ENCODE measurements at regions of chr12 and their contacts with region 1.

Region 1: GRCh38 chr12:109093022-109093918 is at the start of gene ALKBH2:
- DNase-seq: peak; percentile 98
- total RNA-seq, gene ALKBH2: 13.3 to 18.4 TPM

Region 2: GRCh38 chr12:108562348-108563135 is 530.7 kb before region 1 on chr12 and contains the start of gene ISCU:
- intact Hi-C with region 1: loop called (anchors 10 kb)
- DNase-seq: peak; percentile 100
- total RNA-seq, gene ISCU: 113 to 119 TPM

Measured in posterior vena cava (tissue), 2 donors.